Adrenal gland (tissue), 19 donors: ENCODE measurements at regions of chr10 and their contacts with region 1.

Region 1: DNA sequence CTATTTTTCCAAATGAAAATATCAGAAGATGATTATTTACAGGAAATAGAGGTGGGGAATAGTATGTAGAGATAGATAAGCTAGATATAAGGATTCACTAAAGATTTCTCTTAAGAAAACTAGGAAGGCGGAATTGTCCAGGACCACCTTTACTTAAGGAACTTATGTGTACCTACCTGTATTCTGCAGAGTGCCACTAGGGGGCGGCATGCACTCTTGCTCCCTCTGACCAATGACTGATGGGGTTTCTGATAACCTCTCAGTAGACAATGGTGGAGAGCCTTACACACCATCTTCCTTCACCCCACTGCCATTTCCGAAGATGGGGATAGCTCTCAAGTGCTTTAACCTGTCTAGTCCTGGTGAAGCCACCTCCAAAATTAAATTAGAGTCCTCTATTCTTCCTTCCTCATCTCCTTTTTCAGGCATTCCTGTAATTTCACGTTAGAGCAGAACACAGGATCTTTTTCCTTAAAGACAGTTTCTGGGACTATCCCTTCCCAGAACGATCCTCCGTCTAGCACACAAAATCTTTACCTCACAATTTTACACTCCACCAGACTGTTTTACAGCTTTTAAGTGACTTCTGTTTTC is 453.1 kb downstream of the SORCS1 start:
- DNase-seq: peak in 6 of 7 donors; percentile 24 to 70 (median 42)
- H3K4me3 ChIP-seq: no peak overlapping the region
- H3K27ac ChIP-seq: no peak overlapping the region
- H3K4me1 ChIP-seq: no peaks in the 10 kb centered on the region
- H3K27me3 ChIP-seq: no peaks in the 10 kb centered on the region
- CTCF ChIP-seq: peak; percentile 25 to 54 (median 41)
- POLR2A ChIP-seq: no peak

Region 2: DNA sequence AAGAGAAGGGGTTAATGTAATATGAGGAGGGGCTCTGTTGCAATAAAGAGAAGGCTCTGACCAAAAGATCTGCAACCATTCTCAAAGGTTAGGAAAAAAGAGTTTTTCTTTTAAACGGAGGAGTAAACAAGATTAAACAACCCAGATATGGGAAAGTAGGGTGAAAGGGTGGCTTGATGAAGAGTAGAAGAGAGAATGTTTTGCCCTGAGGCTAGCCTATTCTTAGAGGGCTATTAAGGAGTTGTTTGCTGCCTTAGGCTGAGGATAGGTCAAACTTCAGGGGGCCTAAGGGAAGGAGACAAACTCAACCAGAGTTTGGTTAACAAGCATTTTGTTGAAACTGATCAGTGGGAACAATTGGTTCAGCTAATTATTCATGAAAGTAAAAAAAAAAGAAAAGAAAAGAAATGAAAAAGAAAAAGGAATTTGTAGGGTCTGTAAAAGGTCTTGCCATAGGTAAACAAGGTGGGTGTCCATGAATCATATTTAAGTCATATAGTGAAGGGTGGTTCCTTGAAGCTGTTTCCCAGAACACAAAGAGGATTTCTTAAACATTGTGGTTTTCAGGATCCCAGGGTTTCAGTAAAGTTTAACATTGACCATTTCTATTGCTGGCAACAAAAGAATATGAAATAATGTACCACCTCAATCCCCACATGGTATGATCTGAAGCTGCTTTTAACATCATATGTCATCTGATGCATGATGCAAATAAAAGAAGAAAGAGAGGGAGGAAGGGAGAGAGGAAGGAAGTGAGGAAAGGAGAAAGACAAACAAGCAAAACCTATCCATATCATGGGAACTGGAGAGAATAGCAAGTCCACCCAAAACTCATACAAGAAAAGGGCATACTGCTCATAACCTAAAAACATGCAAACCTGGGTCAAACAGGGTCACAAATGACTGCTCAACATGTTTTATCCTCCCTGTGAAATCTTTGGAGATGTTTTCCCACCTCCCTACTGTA is 210.6 kb before region 1 on chr10:
- intact Hi-C with region 1: no loop called
- DNase-seq: no peak
- H3K4me3 ChIP-seq: no peak overlapping the region
- H3K27ac ChIP-seq: no peak overlapping the region
- H3K4me1 ChIP-seq: no peaks in the 10 kb centered on the region
- H3K27me3 ChIP-seq: no peaks in the 10 kb centered on the region
- CTCF ChIP-seq: no peak
- POLR2A ChIP-seq: no peak

Region 3: DNA sequence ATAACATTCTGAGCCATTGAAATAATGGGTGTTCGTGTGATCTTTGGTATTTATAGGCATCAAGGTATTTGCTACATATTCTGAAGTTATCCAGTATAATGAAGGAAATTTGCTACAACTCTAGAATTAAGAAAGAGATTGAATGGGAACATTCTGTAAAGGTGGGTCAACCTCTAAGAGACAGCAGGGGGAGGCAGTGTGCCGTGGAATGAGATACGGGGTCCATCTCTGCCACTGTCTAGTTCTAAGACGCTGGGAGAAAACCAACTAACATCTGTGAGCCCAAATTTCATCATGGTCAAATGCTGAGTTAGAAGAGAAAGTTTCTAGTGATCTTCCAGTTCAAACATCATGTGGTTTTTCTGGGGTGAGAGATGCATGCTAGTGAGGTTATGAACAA is 84.2 kb after region 1 on chr10:
- intact Hi-C with region 1: no loop called
- DNase-seq: peak in 4 of 7 donors; percentile 15 to 60 (median 26)
- H3K4me3 ChIP-seq: no peak overlapping the region
- H3K27ac ChIP-seq: no peak overlapping the region
- H3K4me1 ChIP-seq: no peaks in the 10 kb centered on the region
- H3K27me3 ChIP-seq: no peaks in the 10 kb centered on the region
- CTCF ChIP-seq: peak; percentile 12 to 44 (median 36)
- POLR2A ChIP-seq: no peak

Region 4: DNA sequence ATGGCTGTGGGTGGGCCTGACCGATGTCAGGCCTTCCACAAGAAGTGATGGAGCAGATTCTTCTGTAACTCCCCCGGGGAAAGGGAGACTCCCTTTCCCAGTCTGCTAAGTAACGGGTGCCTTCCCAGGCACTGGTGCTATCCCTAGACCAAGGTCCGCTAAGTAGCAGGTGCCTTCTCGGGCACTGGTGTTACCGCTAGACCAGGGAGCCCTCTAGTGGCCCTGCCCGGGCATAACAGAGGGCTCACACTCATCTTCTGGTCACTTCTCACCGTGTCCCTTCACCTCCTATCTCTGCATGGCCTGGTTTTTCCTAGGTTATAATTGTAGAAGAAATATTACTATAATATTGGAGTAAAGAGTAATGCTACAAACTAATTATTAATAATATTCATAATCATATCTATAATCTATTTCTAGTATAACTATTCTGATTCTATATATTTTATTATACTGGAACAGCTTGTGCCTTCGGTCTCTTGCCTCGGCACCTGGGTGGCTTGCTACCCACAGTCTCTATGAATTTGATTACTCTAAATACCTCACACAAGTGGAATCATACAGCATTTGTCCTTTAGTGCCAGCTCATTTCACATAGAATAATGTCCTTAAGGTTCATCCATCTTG is 1833.2 kb after region 1 on chr10:
- intact Hi-C with region 1: loop called in 1 of 2 experiments (anchors 5 kb)
- DNase-seq: peak; percentile 42 to 88 (median 67)
- H3K4me3 ChIP-seq: no peak overlapping the region
- H3K27ac ChIP-seq: no peak overlapping the region
- H3K4me1 ChIP-seq: no peaks in the 10 kb centered on the region
- H3K27me3 ChIP-seq: no peaks in the 10 kb centered on the region
- CTCF ChIP-seq: peak; percentile 52 to 82 (median 73)
- POLR2A ChIP-seq: no peak